H1 (cell line): ENCODE measurements at regions of chrX and their contacts with region 1.

Region 1: GRCh38 chrX:109709129-109709631 is 23.9 kb downstream of the ACSL4 start:
- DNase-seq: no peak
- H3K4me3 ChIP-seq: no peak overlapping the region
- H3K27ac ChIP-seq: no peak overlapping the region
- H3K4me1 ChIP-seq: no peaks in the 10 kb centered on the region
- H3K27me3 ChIP-seq: no peaks in the 10 kb centered on the region
- CTCF ChIP-seq: no peak
- EP300 ChIP-seq: no peak
- POLR2A ChIP-seq: no peak
- RAD21 ChIP-seq: no peak

Region 2: GRCh38 chrX:109862433-109862832 is 153.3 kb after region 1 on chrX:
- CTCF ChIA-PET with region 1: interaction called, 28 read pairs
- POLR2A ChIA-PET with region 1: no interaction called
- DNase-seq: no peak
- H3K4me3 ChIP-seq: no peak overlapping the region
- H3K27ac ChIP-seq: no peak overlapping the region
- H3K4me1 ChIP-seq: no peaks in the 10 kb centered on the region
- H3K27me3 ChIP-seq: no peaks in the 10 kb centered on the region
- CTCF ChIP-seq: no peak
- EP300 ChIP-seq: no peak
- POLR2A ChIP-seq: no peak
- RAD21 ChIP-seq: no peak